Motor neuron (in vitro differentiated cells): ENCODE measurements at regions of chr4 and their contacts with region 1.

Region 1: GRCh38 chr4:75995727-75996126 is 5.0 kb upstream of the SDAD1 start:
- ATAC-seq: peak in 1 of 8 experiments; percentile 11
- H3K4me3 ChIP-seq: no peak overlapping the region
- H3K27ac ChIP-seq: no peak overlapping the region
- H3K4me1 ChIP-seq: peaks cover 0 to 4% of the 10 kb centered on the region in 2 donors

Region 2: GRCh38 chr4:76067652-76068286 is 72.0 kb after region 1 on chr4:
- in situ Hi-C with region 1: loop called in 3 of 9 experiments (anchors 5 to 10 kb)
- ATAC-seq: peak; percentile 56 to 96 (median 74)
- H3K4me3 ChIP-seq: no peak overlapping the region
- H3K27ac ChIP-seq: no peak overlapping the region
- H3K4me1 ChIP-seq: no peaks in the 10 kb centered on the region

Region 3: DNA sequence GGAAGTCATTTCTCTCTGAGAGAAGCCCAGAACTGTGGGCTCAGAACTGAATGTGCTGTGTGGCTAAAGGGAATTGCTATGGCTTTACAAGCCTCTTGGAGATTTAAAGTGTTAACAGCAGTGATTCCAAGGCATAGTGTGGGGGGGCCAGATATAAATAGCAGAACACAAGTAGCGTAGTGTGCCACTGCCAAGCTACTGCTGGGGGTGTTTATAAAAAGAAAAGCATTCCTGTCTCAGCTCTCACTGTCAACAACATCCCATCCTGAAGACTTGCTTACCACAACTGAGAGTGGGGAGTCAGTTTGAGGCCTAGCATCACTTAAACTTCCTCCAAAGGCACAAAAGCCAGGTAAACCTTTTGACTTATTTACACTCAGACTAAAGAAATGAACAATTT is 78.7 kb after region 1 on chr4 and contains the start of gene ART3:
- in situ Hi-C with region 1: loop called in 4 of 9 experiments (anchors 5 to 25 kb)
- ATAC-seq: peak in 1 of 8 experiments; percentile 28
- H3K4me3 ChIP-seq: no peak within 1 kb of the TSS
- H3K27ac ChIP-seq: no peak within 1 kb of the TSS
- H3K4me1 ChIP-seq: no peaks in the 10 kb centered on the region
- total RNA-seq, gene ART3: 0.32 to 65.1 (median 0.78) TPM

Region 4: GRCh38 chr4:76087007-76087769 is 91.5 kb after region 1 on chr4:
- in situ Hi-C with region 1: loop called in 1 of 9 experiments (anchors 25 kb)
- ATAC-seq: peak; percentile 80 to 98 (median 84)
- H3K4me3 ChIP-seq: no peak overlapping the region
- H3K27ac ChIP-seq: no peak overlapping the region
- H3K4me1 ChIP-seq: peaks cover 0 to 15% of the 10 kb centered on the region in 2 donors

Region 5: GRCh38 chr4:76931087-76931486 is 935.4 kb after region 1 on chr4:
- in situ Hi-C with region 1: no loop called
- ATAC-seq: peak in 3 of 8 experiments; percentile 30 to 59 (median 57)
- H3K4me3 ChIP-seq: no peak overlapping the region
- H3K27ac ChIP-seq: no peak overlapping the region
- H3K4me1 ChIP-seq: no peaks in the 10 kb centered on the region